PC-9 (cell line): ENCODE measurements at regions of chr14 and their contacts with region 1.

Region 1: GRCh38 chr14:68939893-68940613 is 39.0 kb downstream of the ACTN1 start:
- DNase-seq: peak; percentile 76 to 80
- H3K4me3 ChIP-seq: no peak overlapping the region
- H3K27ac ChIP-seq: peak overlapping the region; percentile 40
- H3K4me1 ChIP-seq: peaks cover 78% of the 10 kb centered on the region
- H3K27me3 ChIP-seq: no peaks in the 10 kb centered on the region
- CTCF ChIP-seq: no peak

Region 2: GRCh38 chr14:68718023-68718995 is 221.7 kb before region 1 on chr14:
- CTCF ChIA-PET with region 1: no interaction called
- POLR2A ChIA-PET with region 1: no interaction called
- intact Hi-C with region 1: no loop called
- DNase-seq: no peak
- H3K4me3 ChIP-seq: no peak overlapping the region
- H3K27ac ChIP-seq: no peak overlapping the region
- H3K4me1 ChIP-seq: no peaks in the 10 kb centered on the region
- H3K27me3 ChIP-seq: no peaks in the 10 kb centered on the region
- CTCF ChIP-seq: peak; percentile 60

Region 3: GRCh38 chr14:68911594-68912227 is 28.3 kb before region 1 on chr14:
- CTCF ChIA-PET with region 1: interaction called, 3 read pairs
- POLR2A ChIA-PET with region 1: interaction called, 4 read pairs
- intact Hi-C with region 1: loop called (anchors 1 kb)
- DNase-seq: peak; percentile 69 to 73
- H3K4me3 ChIP-seq: no peak overlapping the region
- H3K27ac ChIP-seq: no peak overlapping the region
- H3K4me1 ChIP-seq: no peaks in the 10 kb centered on the region
- H3K27me3 ChIP-seq: no peaks in the 10 kb centered on the region
- CTCF ChIP-seq: peak; percentile 98

Region 4: DNA sequence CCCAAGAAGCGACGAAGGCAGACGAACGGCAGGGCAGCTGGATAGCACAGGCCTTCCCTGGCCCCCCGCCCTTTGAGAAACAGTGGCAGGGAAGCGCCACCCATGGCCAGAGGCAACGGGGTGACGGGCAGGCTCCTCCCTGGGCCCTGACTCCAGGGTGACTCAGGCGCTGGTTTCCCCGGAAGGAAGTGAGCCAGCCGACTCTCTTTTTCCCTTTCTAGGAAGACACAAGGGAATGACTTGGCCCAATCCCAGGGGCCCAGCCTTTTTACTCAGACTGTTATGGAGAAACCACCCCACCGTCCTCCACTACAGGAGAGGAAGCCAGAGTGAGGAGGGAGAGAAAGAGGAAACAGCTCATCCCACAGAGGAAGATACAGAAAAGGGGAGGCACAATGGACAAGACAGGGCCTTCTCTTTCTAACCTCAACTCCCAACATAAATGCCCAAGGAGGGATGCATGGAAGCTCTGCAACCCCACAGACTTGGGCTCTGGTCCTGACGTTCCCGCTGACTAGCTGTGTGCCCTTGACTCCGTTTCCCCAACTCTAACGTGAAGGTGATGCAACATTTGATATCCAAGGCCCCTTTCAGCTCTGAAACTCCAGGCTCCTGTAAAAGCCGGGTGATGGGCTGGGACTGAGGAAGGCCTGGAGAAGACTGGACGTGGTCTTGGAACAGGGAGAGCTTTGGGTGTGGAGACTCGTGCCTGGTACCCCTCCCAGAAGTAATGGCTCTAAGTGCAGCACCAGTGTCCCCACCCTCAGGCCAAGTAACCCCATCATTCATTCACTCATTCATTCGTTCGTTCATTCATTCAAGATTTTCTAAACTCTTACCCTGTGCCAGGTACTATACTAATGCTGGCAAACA is 11.2 kb after region 1 on chr14:
- CTCF ChIA-PET with region 1: interaction called, 13 read pairs
- POLR2A ChIA-PET with region 1: interaction called, 30 read pairs
- intact Hi-C with region 1: loop called (anchors 1 kb)
- DNase-seq: peak; percentile 96 to 97
- H3K4me3 ChIP-seq: peak overlapping the region; percentile 32; the same call in 1 of the 2 replicates
- H3K27ac ChIP-seq: peak overlapping the region; percentile 77
- H3K4me1 ChIP-seq: peaks cover 60% of the 10 kb centered on the region
- H3K27me3 ChIP-seq: no peaks in the 10 kb centered on the region
- CTCF ChIP-seq: no peak

Region 5: DNA sequence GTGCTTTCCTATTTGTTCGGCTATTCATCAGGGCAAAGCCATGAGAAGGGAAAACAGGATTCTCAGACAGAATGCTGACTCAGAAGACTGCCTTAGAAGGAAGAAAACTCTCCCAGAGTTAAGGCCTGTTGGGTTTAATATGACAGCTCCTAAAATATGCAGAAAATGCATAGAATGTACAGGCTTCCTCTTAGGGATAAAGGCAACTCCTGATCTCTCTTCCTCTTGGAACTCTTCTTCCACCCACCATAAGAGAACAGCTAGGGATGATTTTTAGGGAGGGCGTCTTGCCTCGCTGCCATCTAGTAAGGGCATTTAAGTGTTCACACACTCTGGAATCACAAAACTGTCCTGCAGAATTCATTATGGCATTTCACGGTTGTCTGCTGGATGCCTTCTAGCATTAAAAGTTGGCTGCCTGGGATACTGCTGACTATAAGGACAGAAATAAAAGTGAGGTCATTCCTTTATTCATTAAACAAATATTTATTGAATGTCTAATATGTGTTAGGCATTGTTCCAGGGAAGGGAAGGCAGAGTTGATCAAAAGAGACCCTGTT is 139.2 kb after region 1 on chr14:
- CTCF ChIA-PET with region 1: interaction called, 4 read pairs
- POLR2A ChIA-PET with region 1: interaction called, 3 read pairs
- intact Hi-C with region 1: loop called (anchors 1 kb)
- DNase-seq: peak; percentile 30 to 92
- H3K4me3 ChIP-seq: no peak overlapping the region
- H3K27ac ChIP-seq: peak overlapping the region; percentile 77
- H3K4me1 ChIP-seq: peaks cover 47% of the 10 kb centered on the region
- H3K27me3 ChIP-seq: no peaks in the 10 kb centered on the region
- CTCF ChIP-seq: no peak